ENCODE measurements at regions of chr17 and their contacts with region 1.

Region 1: DNA sequence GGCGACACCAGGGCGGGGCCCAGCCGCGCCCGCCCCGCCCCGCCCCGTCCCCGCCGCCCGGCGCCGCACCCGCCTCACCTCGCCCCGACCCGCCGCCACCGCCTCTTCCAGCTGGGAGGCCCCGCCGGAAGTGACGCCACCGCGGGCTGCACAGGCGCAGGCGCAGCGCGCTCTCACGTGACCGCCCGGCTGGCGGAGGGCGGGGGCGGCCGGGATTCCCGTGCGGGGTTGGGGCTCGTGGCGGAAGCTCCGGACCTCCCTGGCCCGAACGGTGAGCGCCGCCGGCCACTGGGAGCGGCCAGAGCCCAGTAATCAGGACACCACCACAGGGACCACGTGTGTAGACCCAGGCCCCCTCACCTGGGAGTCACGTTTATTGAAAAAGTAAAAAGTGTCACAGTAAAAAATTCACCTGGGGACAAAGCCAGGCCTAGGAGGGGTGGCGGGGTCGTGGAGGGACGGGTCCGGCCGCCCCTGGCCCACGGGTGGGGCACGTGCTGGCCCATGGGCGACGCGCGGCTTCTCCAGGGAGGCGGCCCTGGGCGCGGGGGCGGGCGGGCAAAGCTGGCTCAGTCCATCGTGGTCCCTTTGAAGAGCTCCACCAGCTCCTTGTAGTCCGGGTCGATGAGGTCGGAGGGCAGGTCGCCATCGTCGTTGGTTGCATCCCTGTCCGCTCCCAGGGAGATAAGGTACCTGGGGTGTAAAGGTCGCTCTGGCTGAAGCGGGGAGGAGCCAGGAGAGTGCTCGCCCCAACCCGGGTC is at the start of gene MCRIP1:
- DNase-seq: peak; percentile 95
- H3K4me3 Mint-ChIP-seq: peak within 1 kb of the TSS; percentile 95
- H3K27ac Mint-ChIP-seq: peak within 1 kb of the TSS; percentile 88
- H3K4me1 Mint-ChIP-seq: peaks cover 16% of the 10 kb centered on the region
- H3K27me3 Mint-ChIP-seq: no peaks in the 10 kb centered on the region
- total RNA-seq, gene MCRIP1: 53.7 to 55.6 TPM

Region 2: GRCh38 chr17:80876950-80877728 is 956.2 kb before region 1 on chr17:
- CTCF ChIA-PET with region 1: no interaction called
- intact Hi-C with region 1: no loop called
- DNase-seq: peak; percentile 85
- H3K4me3 Mint-ChIP-seq: peak overlapping the region; percentile 64
- H3K27ac Mint-ChIP-seq: peak overlapping the region; percentile 96
- H3K4me1 Mint-ChIP-seq: peaks cover 51% of the 10 kb centered on the region
- H3K27me3 Mint-ChIP-seq: no peaks in the 10 kb centered on the region

Region 3: DNA sequence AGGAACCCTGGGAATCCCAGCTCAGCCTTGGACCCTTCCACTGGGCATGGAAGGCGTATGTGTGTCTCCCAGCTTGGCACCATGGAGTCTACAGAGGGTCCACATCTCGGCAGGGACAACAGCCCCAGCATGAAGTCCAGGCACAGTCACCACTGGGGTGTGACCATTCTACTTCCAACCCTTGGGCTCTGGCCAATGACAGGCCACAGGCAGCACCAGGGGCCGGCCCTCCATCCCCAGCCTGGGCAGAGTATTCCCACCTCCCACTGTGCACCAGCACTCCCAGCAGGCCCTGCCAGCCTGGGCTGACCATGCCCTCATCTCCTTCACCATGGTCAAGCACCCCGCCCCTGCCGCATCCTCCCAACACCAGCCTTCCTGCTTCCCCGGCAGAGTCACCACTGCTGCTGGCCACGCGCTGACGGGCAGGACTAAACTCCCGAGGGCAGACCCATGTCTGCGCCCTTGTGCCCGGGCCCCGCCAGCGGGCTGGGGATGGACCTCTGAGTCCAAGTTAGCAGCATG is 11.0 kb after region 1 on chr17:
- CTCF ChIA-PET with region 1: no interaction called
- intact Hi-C with region 1: no loop called
- DNase-seq: no peak
- H3K4me3 Mint-ChIP-seq: no peak overlapping the region
- H3K27ac Mint-ChIP-seq: no peak overlapping the region
- H3K4me1 Mint-ChIP-seq: no peaks in the 10 kb centered on the region
- H3K27me3 Mint-ChIP-seq: no peaks in the 10 kb centered on the region

Region 4: GRCh38 chr17:81871387-81872230 is 38.3 kb after region 1 on chr17:
- CTCF ChIA-PET with region 1: no interaction called
- intact Hi-C with region 1: no loop called
- DNase-seq: peak; percentile 96
- H3K4me3 Mint-ChIP-seq: peak overlapping the region; percentile 83
- H3K27ac Mint-ChIP-seq: peak overlapping the region; percentile 94
- H3K4me1 Mint-ChIP-seq: peaks cover 48% of the 10 kb centered on the region
- H3K27me3 Mint-ChIP-seq: no peaks in the 10 kb centered on the region

Region 5: GRCh38 chr17:81890447-81891299 is 57.3 kb after region 1 on chr17:
- CTCF ChIA-PET with region 1: no interaction called
- intact Hi-C with region 1: loop called (anchors 2 kb)
- DNase-seq: peak; percentile 43
- H3K4me3 Mint-ChIP-seq: peak overlapping the region; percentile 85
- H3K27ac Mint-ChIP-seq: peak overlapping the region; percentile 93
- H3K4me1 Mint-ChIP-seq: peaks cover 33% of the 10 kb centered on the region
- H3K27me3 Mint-ChIP-seq: no peaks in the 10 kb centered on the region